ENCODE measurements at regions of chr10 and their contacts with region 1.

Region 1: DNA sequence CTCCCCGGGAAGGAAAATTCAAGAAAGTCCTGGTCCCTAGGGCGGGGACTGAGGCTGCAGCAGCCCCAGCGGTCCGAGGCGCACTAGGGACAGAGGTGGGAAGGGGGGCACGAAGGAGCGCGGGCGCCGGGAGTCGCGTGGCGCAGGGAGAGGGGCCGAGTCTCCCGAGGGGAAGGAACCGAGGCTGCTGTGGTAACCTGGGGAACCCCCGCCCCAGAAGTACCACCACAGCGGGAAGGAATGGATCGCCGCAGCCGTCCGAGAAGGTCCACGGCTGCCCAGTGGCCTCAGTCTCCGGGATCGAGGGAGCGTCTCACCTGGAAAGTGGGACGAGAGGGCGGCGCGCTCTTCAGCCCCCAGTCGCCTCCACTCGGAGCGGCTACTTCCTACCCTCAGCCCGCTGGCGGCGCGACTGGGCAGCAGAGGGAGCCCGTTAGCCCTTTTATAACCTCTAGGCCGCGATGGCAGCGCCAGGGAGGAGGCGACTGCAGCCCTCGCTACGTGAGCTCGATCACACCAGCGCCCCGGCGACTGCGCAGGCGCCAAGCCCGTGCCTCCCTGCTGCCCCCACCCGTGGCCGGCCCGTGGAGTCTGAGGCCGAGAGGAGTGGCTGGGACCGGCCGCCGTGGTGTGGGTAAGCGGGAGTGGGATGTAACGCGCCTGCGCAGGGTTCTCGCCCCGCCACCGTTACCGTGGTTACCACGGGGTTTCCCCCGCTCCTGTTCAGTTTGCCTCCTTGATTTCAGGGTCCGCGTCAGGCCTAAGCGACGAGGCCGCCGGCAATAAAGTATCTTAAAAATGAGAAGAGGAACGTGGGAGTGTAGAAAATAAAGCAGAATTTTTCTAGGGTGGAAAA is at the start of gene P4HA1:
- DNase-seq: peak; percentile 100
- ATAC-seq: peak; percentile 91
- H3K4me3 ChIP-seq: peak within 1 kb of the TSS; percentile 88 to 98 (median 92)
- H3K4me3 Mint-ChIP-seq: peak within 1 kb of the TSS; percentile 93
- H3K27ac ChIP-seq: peak within 1 kb of the TSS; percentile 93 to 98
- H3K27ac Mint-ChIP-seq: peak within 1 kb of the TSS; percentile 91
- H3K4me1 ChIP-seq: peaks cover 10 to 18% of the 10 kb centered on the region in 2 donors
- H3K4me1 Mint-ChIP-seq: peaks cover 30% of the 10 kb centered on the region
- H3K27me3 ChIP-seq: no peaks in the 10 kb centered on the region
- H3K27me3 Mint-ChIP-seq: no peaks in the 10 kb centered on the region
- CTCF ChIP-seq: peak; percentile 76
- total RNA-seq, gene P4HA1: 19.0 and 21.8 TPM in 2 replicates

Region 2: DNA sequence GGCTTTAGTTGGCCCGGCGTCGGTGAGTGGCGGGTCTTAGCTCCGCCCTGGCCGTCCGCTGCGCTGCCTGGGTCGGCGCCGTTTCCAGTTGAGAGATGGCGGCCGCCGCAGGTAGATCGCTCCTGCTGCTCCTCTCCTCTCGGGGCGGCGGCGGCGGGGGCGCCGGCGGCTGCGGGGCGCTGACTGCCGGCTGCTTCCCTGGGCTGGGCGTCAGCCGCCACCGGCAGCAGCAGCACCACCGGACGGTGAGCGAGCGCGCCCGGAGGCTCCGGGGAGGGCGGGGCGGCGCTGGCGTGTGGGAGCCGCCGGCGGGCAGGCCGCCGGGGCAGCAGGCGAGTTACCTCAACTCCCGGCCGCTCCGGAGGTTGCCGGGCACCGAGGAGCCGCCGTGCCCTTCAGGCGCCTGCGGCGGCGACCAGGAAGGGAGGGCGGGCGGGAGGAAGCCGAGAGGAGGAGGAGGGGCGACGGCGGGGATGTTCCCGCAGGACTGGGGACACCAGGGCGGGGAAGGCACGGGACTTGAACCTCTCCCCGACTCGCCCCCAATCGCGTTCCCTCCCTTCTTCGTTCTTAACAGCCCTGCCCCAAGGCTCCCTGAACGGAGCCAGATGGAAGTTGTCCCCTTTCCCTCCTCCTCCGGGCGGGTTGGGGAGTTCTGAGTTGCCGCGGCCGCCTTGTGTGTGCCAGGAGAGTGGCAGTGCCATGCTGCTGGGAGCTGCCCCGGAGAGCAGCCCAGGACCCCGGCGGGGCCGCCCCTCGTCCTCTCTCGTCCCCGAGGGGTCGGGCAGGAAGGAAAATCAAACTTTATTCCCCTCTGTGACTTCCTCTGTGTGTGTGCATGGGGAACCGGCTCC is 404.4 kb before region 1 on chr10 and contains the start of gene MCU:
- CTCF ChIA-PET with region 1: interaction called, 6 read pairs
- POLR2A ChIA-PET with region 1: interaction called, 5 read pairs
- intact Hi-C with region 1: loop called (anchors 5 kb)
- DNase-seq: peak; percentile 94
- ATAC-seq: peak; percentile 95
- H3K4me3 ChIP-seq: peak within 1 kb of the TSS; percentile 64 to 91 (median 79)
- H3K4me3 Mint-ChIP-seq: peak within 1 kb of the TSS; percentile 95
- H3K27ac ChIP-seq: peak within 1 kb of the TSS; percentile 58 to 72
- H3K27ac Mint-ChIP-seq: peak within 1 kb of the TSS; percentile 91
- H3K4me1 ChIP-seq: peaks cover 28 to 33% of the 10 kb centered on the region in 2 donors
- H3K4me1 Mint-ChIP-seq: peaks cover 43% of the 10 kb centered on the region
- H3K27me3 ChIP-seq: no peaks in the 10 kb centered on the region
- H3K27me3 Mint-ChIP-seq: no peaks in the 10 kb centered on the region
- CTCF ChIP-seq: no peak
- total RNA-seq, gene MCU: 17.6 and 21.1 TPM in 2 replicates

Region 3: DNA sequence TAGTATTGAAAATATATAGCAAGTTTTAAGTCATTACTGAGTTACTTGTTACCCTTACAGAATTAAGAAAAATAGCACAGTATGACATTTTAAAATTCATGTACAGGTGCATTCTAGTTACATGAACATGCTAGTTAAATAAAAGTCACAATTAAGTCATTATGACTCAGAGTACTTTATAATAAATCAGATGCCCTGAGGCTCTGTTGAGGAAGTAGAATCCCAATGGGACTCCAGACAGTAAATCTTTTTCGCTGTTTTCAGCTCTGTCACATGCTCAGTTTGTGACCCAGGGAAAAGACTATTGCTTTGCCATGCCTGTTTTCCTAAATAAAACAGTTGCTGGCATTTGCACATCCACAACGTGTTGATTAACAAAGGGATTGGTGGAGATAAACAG is 34.6 kb after region 1 on chr10:
- CTCF ChIA-PET with region 1: interaction called, 12 read pairs
- POLR2A ChIA-PET with region 1: interaction called, 5 read pairs
- intact Hi-C with region 1: loop called (anchors 5 kb)
- DNase-seq: no peak
- ATAC-seq: no peak
- H3K4me3 ChIP-seq: no peak overlapping the region
- H3K4me3 Mint-ChIP-seq: no peak overlapping the region
- H3K27ac ChIP-seq: no peak overlapping the region
- H3K27ac Mint-ChIP-seq: no peak overlapping the region
- H3K4me1 ChIP-seq: no peaks in the 10 kb centered on the region
- H3K4me1 Mint-ChIP-seq: peaks cover 12% of the 10 kb centered on the region
- H3K27me3 ChIP-seq: no peaks in the 10 kb centered on the region
- H3K27me3 Mint-ChIP-seq: no peaks in the 10 kb centered on the region
- CTCF ChIP-seq: no peak

Region 4: GRCh38 chr10:73167783-73168464 is 71.2 kb after region 1 on chr10 and contains the starts of genes ECD and FAM149B1:
- CTCF ChIA-PET with region 1: interaction called, 8 read pairs
- POLR2A ChIA-PET with region 1: no interaction called
- intact Hi-C with region 1: loop called (anchors 1 kb)
- DNase-seq: peak; percentile 95
- ATAC-seq: peak; percentile 97
- H3K4me3 ChIP-seq: peak within 1 kb of the TSS; percentile 72 to 99 (median 98)
- H3K4me3 Mint-ChIP-seq: peak within 1 kb of the TSS; percentile 100
- H3K27ac ChIP-seq: peak within 1 kb of the TSS; percentile 90
- H3K27ac Mint-ChIP-seq: peak within 1 kb of the TSS; percentile 97
- H3K4me1 ChIP-seq: peaks cover 18 to 19% of the 10 kb centered on the region in 2 donors
- H3K4me1 Mint-ChIP-seq: peaks cover 37% of the 10 kb centered on the region
- H3K27me3 ChIP-seq: no peaks in the 10 kb centered on the region
- H3K27me3 Mint-ChIP-seq: no peaks in the 10 kb centered on the region
- CTCF ChIP-seq: no peak
- total RNA-seq, gene ECD: 37.1 and 38.8 TPM in 2 replicates
- total RNA-seq, gene FAM149B1: 22.5 and 25.9 TPM in 2 replicates

Region 5: DNA sequence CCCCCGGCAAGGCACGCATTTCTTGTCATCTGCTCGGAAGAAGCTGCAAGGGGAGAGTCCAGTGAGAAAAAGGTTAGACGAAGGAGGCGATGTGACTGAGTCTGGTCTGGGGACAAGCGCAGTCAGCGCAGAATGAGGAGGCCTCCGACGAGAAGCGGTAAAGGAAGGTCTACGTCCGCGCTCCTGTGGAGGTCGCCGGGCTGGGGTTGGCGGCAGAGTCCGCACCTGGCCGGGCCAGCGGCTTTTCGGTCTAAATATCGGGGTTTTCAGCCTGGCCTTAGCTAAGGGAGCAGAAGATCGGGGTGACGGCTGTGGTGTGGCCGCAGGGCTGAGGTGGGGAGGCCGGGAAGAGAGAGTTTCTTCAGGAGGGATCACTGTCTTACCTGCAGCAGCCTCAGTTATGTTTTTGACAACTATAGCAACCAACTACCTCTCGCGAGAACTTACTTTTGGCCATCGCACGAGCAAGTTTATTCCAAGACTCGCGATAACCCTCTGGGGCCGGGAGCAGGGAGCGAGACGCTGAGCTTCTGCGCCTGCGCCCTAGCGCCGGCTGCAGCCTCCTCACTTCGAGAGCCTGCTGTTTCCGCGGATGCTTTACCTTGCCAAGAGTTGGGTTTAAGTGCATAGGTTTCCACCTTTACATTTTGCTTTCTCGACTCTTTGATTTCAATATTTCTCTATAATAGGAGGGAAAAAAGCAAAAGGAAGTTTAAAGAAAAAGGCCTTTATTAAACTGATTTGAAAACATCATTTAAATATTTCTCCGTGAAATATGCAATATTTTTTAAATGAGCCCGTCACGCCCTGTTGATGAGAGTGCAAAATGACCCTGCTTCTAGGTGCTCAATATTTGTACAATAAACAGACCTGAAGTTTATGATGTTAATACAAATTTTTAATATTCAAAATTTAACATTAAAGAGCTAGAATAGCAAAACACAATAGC is 261.9 kb after region 1 on chr10 and contains the start of gene CFAP70:
- CTCF ChIA-PET with region 1: interaction called, 5 read pairs
- POLR2A ChIA-PET with region 1: no interaction called
- intact Hi-C with region 1: loop called (anchors 2 kb)
- DNase-seq: peak; percentile 95
- ATAC-seq: peak; percentile 97
- H3K4me3 ChIP-seq: peak within 1 kb of the TSS; percentile 58 to 84 (median 73)
- H3K4me3 Mint-ChIP-seq: peak within 1 kb of the TSS; percentile 98
- H3K27ac ChIP-seq: peak within 1 kb of the TSS; percentile 26 to 79
- H3K27ac Mint-ChIP-seq: peak within 1 kb of the TSS; percentile 94
- H3K4me1 ChIP-seq: peaks cover 6 to 11% of the 10 kb centered on the region in 2 donors
- H3K4me1 Mint-ChIP-seq: peaks cover 15% of the 10 kb centered on the region
- H3K27me3 ChIP-seq: peaks cover 0 to 6% (median 0%) of the 10 kb centered on the region in 4 experiments
- H3K27me3 Mint-ChIP-seq: peaks cover 4% of the 10 kb centered on the region
- CTCF ChIP-seq: no peak
- total RNA-seq, gene CFAP70: 2.9 and 3.6 TPM in 2 replicates

Region 6: GRCh38 chr10:73495884-73496674 is 399.4 kb after region 1 on chr10 and contains the start of gene PPP3CB:
- CTCF ChIA-PET with region 1: no interaction called
- POLR2A ChIA-PET with region 1: no interaction called
- intact Hi-C with region 1: loop called (anchors 5 kb)
- DNase-seq: peak; percentile 94
- ATAC-seq: peak; percentile 70
- H3K4me3 ChIP-seq: peak within 1 kb of the TSS; percentile 63 to 97 (median 85)
- H3K4me3 Mint-ChIP-seq: peak within 1 kb of the TSS; percentile 94
- H3K27ac ChIP-seq: peak within 1 kb of the TSS; percentile 89 to 93
- H3K27ac Mint-ChIP-seq: peak within 1 kb of the TSS; percentile 96
- H3K4me1 ChIP-seq: peaks cover 30 to 40% of the 10 kb centered on the region in 2 donors
- H3K4me1 Mint-ChIP-seq: peaks cover 52% of the 10 kb centered on the region
- H3K27me3 ChIP-seq: no peaks in the 10 kb centered on the region
- H3K27me3 Mint-ChIP-seq: no peaks in the 10 kb centered on the region
- CTCF ChIP-seq: no peak
- total RNA-seq, gene PPP3CB: 51.2 and 52.8 TPM in 2 replicates

Measured in B cell (primary cell).